ENCODE measurements at regions of chr17 and their contacts with region 1.

Region 1: DNA sequence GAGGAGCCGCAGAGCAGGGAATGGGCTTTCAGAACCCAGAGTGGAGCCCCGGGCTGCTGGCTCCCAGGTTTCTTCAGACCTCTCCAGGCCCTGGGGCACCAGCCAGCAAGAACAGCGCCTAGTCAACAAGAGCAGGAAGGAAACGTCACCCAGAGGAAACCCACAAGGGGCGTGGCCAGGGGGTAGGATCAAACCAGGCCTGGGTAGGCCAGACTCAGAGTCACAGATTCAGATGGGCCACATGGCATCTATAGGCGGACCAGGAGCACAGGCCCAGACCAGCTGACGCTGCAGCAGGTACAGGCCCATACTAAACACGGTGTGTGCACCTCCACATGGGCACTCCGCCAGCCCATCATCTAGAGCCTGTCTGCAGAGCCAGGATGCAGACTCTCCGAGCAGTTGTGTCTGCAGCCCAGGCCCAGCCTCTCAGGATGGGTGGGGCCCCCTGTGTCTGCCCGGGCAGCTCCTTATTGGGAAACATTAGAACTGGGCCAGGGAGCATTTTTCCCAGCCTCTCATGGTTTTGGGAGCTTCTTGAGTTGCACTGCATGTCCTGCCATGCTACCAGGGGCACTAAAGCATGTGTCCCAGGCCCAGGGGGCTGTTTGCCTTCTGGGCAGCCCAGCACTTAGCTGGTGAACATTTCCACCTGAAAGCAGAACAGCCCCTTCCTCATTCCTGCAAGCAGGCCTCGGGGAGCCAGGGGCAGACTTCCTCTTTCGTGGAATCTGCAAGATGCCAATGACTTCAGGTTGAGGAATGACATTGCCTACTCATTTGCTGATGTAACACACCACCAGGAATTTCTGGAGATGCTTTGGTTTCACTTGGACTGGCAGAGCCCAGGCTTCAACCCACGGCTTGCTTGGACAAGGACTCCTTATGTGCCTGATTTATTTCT is at the start of gene NLRP1:
- DNase-seq: peak; percentile 72 to 79
- ATAC-seq: peak; percentile 59 to 80
- H3K4me3 ChIP-seq: peak within 1 kb of the TSS; percentile 49 to 59 (median 56)
- H3K27ac ChIP-seq: peak within 1 kb of the TSS; percentile 79 to 84 (median 83)
- H3K4me1 ChIP-seq: peaks cover 19 to 21% of the 10 kb centered on the region in 2 donors
- H3K27me3 ChIP-seq: no peaks in the 10 kb centered on the region
- CTCF ChIP-seq: no peak
- POLR2A ChIP-seq: peak; percentile 45 to 68
- total RNA-seq, gene NLRP1: 3.6 to 7.7 (median 6.9) TPM

Region 2: GRCh38 chr17:5706577-5707216 is 122.1 kb after region 1 on chr17:
- in situ Hi-C with region 1: loop called in 2 of 4 experiments (anchors 10 to 25 kb)
- intact Hi-C with region 1: loop called (anchors 1 kb)
- DNase-seq: peak; percentile 18 to 43
- ATAC-seq: peak; percentile 79 to 80
- H3K4me3 ChIP-seq: no peak overlapping the region
- H3K27ac ChIP-seq: no peak overlapping the region
- H3K4me1 ChIP-seq: peaks cover 0 to 3% of the 10 kb centered on the region in 2 donors
- H3K27me3 ChIP-seq: peaks cover 0 to 10% (median 0%) of the 10 kb centered on the region in 3 donors
- CTCF ChIP-seq: peak; percentile 43 to 73 (median 64)
- POLR2A ChIP-seq: no peak

Region 3: GRCh38 chr17:6069539-6070429 is 485.1 kb after region 1 on chr17 and contains the start of gene WSCD1:
- in situ Hi-C with region 1: loop called in 2 of 4 experiments (anchors 25 kb)
- intact Hi-C with region 1: no loop called
- DNase-seq: no peak
- ATAC-seq: peak; percentile 51 to 55
- H3K4me3 ChIP-seq: peak within 1 kb of the TSS; percentile 52 to 62 (median 60)
- H3K27ac ChIP-seq: peak within 1 kb of the TSS; percentile 6 to 65 (median 48)
- H3K4me1 ChIP-seq: peaks cover 15 to 19% of the 10 kb centered on the region in 2 donors
- H3K27me3 ChIP-seq: peaks cover 0 to 1% (median 0%) of the 10 kb centered on the region in 3 donors
- CTCF ChIP-seq: no peak
- POLR2A ChIP-seq: no peak
- total RNA-seq, gene WSCD1: 2.7 to 15.3 (median 5.9) TPM

Region 4: GRCh38 chr17:6421700-6422604 is 837.3 kb after region 1 on chr17:
- in situ Hi-C with region 1: loop called in 3 of 4 experiments (anchors 5 kb)
- intact Hi-C with region 1: loop called (anchors 1 kb)
- DNase-seq: peak; percentile 27 to 55
- ATAC-seq: peak; percentile 39 to 79
- H3K4me3 ChIP-seq: no peak overlapping the region
- H3K27ac ChIP-seq: no peak overlapping the region
- H3K4me1 ChIP-seq: no peaks in the 10 kb centered on the region
- H3K27me3 ChIP-seq: no peaks in the 10 kb centered on the region
- CTCF ChIP-seq: peak; percentile 75 to 87 (median 85)
- POLR2A ChIP-seq: no peak

Region 5: GRCh38 chr17:6435968-6436367 is 851.3 kb after region 1 on chr17:
- in situ Hi-C with region 1: loop called in 1 of 4 experiments (anchors 5 kb)
- intact Hi-C with region 1: loop called (anchors 5 kb)
- DNase-seq: peak; percentile 17 to 43
- ATAC-seq: peak; percentile 80 to 86
- H3K4me3 ChIP-seq: no peak overlapping the region
- H3K27ac ChIP-seq: no peak overlapping the region
- H3K4me1 ChIP-seq: no peaks in the 10 kb centered on the region
- H3K27me3 ChIP-seq: peaks cover 4 to 7% (median 5%) of the 10 kb centered on the region in 3 donors
- CTCF ChIP-seq: peak; percentile 61 to 79 (median 71)
- POLR2A ChIP-seq: no peak

Measured in gastrocnemius medialis (tissue), 4 donors.